A549 (cell line): ENCODE measurements at regions of chr17 and their contacts with region 1.

Region 1: GRCh38 chr17:49191917-49192741 is 18.2 kb downstream of the GNGT2 start:
- DNase-seq: peak; percentile 75 to 98
- ATAC-seq: peak; percentile 75 to 77
- H3K4me3 ChIP-seq: peak overlapping the region; percentile 64
- H3K27ac ChIP-seq: peak overlapping the region; percentile 93 to 96
- H3K4me1 ChIP-seq: peaks cover 13% of the 10 kb centered on the region
- CTCF ChIP-seq: peak; percentile 70
- EP300 ChIP-seq: peak in 1 of 2 experiments; percentile 11; a peak in 1 of 5 replicates
- POLR2A ChIP-seq: peak; percentile 29
- RAD21 ChIP-seq: peak; percentile 40 to 66

Region 2: DNA sequence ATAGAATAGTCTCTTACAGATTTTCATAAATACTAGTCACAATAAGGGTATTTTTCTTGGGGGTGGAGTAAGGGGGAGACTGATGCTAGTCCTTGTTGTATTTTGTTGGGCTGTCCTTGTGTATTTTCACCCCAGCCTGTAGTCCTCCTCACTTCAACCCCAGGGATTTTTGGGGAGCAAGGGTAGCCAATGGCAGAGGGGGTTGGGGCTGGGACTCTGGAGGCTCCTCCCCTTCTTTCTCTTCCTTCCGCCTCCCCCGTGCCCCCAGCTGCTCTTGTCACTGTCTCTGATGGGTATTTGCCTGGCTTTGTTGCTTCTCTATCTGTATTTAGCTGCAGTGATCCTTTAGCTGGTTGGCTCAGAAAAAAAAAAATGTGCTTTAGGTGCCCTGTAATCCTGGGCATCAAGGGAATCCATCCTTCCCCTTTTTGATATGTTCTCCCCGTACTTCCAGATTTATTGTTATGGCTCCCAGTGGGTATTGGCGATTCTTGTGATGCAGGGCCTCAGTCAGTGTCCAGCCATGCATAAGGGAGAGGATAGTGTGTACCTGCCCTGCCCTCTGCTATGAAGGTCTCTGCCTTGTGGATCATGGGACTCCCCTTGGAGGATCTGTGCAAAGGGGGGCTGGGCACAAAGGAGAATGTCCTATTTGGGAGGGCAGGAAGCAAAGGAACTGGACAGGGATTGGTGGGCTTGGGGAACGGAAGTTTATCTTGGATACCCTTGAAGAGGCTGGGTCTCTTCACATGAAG is 264.0 kb before region 1 on chr17:
- CTCF ChIA-PET with region 1: no interaction called
- POLR2A ChIA-PET with region 1: no interaction called
- DNase-seq: no peak
- ATAC-seq: peak in 1 of 2 experiments; percentile 6; a peak in 1 of 6 replicates
- H3K4me3 ChIP-seq: no peak overlapping the region
- H3K27ac ChIP-seq: no peak overlapping the region
- H3K4me1 ChIP-seq: no peaks in the 10 kb centered on the region
- CTCF ChIP-seq: no peak
- EP300 ChIP-seq: no peak
- POLR2A ChIP-seq: no peak
- RAD21 ChIP-seq: no peak

Region 3: DNA sequence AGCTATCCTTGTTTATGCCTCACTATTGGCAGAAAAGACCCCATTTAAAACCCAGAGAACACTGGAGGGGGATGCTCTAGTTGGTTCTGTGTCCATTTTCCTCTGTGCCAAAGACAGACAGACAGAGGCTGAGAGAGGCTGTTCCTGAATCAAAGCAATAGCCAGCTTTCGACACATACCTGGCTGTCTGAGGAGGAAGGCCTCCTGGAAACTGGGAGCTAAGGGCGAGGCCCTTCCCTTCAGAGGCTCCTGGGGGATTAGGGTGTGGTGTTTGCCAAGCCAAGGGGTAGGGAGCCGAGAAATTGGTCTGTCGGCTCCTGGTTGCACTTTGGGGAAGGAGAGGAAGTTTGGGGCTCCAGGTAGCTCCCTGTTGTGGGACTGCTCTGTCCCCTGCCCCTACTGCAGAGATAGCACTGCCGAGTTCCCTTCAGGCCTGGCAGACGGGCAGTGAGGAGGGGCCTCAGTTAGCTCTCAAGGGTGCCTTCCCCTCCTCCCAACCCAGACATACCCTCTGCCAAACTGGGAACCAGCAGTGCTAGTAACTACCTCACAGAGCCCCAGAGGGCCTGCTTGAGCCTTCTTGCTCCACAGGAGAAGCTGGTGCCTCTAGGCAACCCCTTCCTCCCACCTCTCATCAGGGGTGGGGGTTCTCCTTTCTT is 138.8 kb before region 1 on chr17:
- CTCF ChIA-PET with region 1: interaction called, 11 read pairs
- POLR2A ChIA-PET with region 1: interaction called, 5 read pairs
- DNase-seq: no peak
- ATAC-seq: peak; percentile 21 to 50; a peak in 4 of 6 replicates
- H3K4me3 ChIP-seq: no peak overlapping the region
- H3K27ac ChIP-seq: peak overlapping the region in 1 of 2 experiments; percentile 25; a peak in 1 of 6 replicates
- H3K4me1 ChIP-seq: no peaks in the 10 kb centered on the region
- CTCF ChIP-seq: no peak
- EP300 ChIP-seq: no peak
- POLR2A ChIP-seq: no peak
- RAD21 ChIP-seq: no peak

Region 4: GRCh38 chr17:49063652-49064051 is 128.5 kb before region 1 on chr17:
- CTCF ChIA-PET with region 1: interaction called, 11 read pairs
- POLR2A ChIA-PET with region 1: interaction called, 4 read pairs
- DNase-seq: no peak
- ATAC-seq: no peak
- H3K4me3 ChIP-seq: no peak overlapping the region
- H3K27ac ChIP-seq: no peak overlapping the region
- H3K4me1 ChIP-seq: peaks cover 4% of the 10 kb centered on the region
- CTCF ChIP-seq: no peak
- EP300 ChIP-seq: no peak
- POLR2A ChIP-seq: no peak
- RAD21 ChIP-seq: no peak

Region 5: GRCh38 chr17:49101054-49101947 is 90.8 kb before region 1 on chr17:
- CTCF ChIA-PET with region 1: interaction called, 11 read pairs
- POLR2A ChIA-PET with region 1: interaction called, 15 read pairs
- DNase-seq: no peak
- ATAC-seq: peak; percentile 53 to 54
- H3K4me3 ChIP-seq: no peak overlapping the region
- H3K27ac ChIP-seq: peak overlapping the region; percentile 59 to 83
- H3K4me1 ChIP-seq: peaks cover 32% of the 10 kb centered on the region
- CTCF ChIP-seq: no peak
- EP300 ChIP-seq: no peak
- POLR2A ChIP-seq: no peak
- RAD21 ChIP-seq: no peak

Region 6: GRCh38 chr17:49108318-49108717 is 83.8 kb before region 1 on chr17:
- CTCF ChIA-PET with region 1: interaction called, 12 read pairs
- POLR2A ChIA-PET with region 1: interaction called, 15 read pairs
- DNase-seq: peak; percentile 62 to 72
- ATAC-seq: peak; percentile 36 to 52; a peak in 5 of 6 replicates
- H3K4me3 ChIP-seq: no peak overlapping the region
- H3K27ac ChIP-seq: peak overlapping the region; percentile 81 to 85
- H3K4me1 ChIP-seq: peaks cover 50% of the 10 kb centered on the region
- CTCF ChIP-seq: no peak
- EP300 ChIP-seq: peak; percentile 19 to 59; a peak in 2 of 5 replicates
- POLR2A ChIP-seq: no peak
- RAD21 ChIP-seq: no peak; a peak in 1 of 5 replicates

Region 7: DNA sequence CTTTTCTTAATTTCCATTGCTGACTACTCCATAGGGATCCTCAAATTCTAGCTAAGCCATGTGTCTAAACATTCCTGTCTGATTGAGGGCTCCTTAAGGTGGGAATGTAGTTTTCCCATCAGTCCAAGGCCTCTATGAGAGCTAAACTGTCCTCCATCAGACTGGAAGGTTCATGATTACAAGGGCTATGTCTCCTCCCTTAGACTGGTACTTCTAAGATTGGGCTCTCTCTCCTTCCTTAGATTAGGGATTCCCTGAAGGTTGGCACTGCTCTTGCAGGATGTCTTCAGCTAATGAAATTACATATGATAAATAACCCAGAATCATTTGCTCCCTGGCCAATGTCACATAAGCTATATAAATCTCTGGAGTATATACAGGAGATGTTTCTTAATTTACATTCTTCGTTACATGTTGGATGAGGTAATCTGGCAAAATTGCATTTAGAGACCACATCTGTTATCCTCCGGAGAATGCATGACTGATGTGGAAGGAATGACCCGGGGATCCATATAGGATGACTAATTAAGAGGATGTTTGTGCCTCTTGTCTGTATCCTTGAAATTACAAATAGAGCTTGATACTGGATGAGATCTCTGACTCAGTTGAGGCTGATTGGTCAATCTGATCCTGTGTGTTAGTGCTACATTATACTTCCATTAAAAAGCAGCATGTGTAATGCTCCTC is 45.4 kb before region 1 on chr17:
- CTCF ChIA-PET with region 1: interaction called, 8 read pairs
- POLR2A ChIA-PET with region 1: interaction called, 12 read pairs
- DNase-seq: peak; percentile 83 to 87
- ATAC-seq: peak; percentile 92 to 99
- H3K4me3 ChIP-seq: no peak overlapping the region
- H3K27ac ChIP-seq: peak overlapping the region; percentile 2 to 67; a peak in 3 of 6 replicates
- H3K4me1 ChIP-seq: peaks cover 17% of the 10 kb centered on the region
- CTCF ChIP-seq: no peak
- EP300 ChIP-seq: peak in 1 of 2 experiments; percentile 31; a peak in 1 of 5 replicates
- POLR2A ChIP-seq: no peak
- RAD21 ChIP-seq: no peak

Region 8: GRCh38 chr17:49180303-49180702 is 11.8 kb before region 1 on chr17:
- CTCF ChIA-PET with region 1: interaction called, 55 read pairs
- POLR2A ChIA-PET with region 1: interaction called, 3 read pairs
- DNase-seq: peak; percentile 69 to 79
- ATAC-seq: peak; percentile 62 to 87
- H3K4me3 ChIP-seq: no peak overlapping the region
- H3K27ac ChIP-seq: no peak overlapping the region
- H3K4me1 ChIP-seq: no peaks in the 10 kb centered on the region
- CTCF ChIP-seq: peak; percentile 85
- EP300 ChIP-seq: no peak
- POLR2A ChIP-seq: no peak
- RAD21 ChIP-seq: peak; percentile 72 to 75

Region 9: GRCh38 chr17:49244845-49245244 is 52.7 kb after region 1 on chr17:
- CTCF ChIA-PET with region 1: no interaction called
- POLR2A ChIA-PET with region 1: no interaction called
- DNase-seq: no peak
- ATAC-seq: no peak
- H3K4me3 ChIP-seq: no peak overlapping the region
- H3K27ac ChIP-seq: no peak overlapping the region
- H3K4me1 ChIP-seq: peaks cover 8% of the 10 kb centered on the region
- CTCF ChIP-seq: no peak
- EP300 ChIP-seq: no peak
- POLR2A ChIP-seq: no peak
- RAD21 ChIP-seq: no peak

Region 10: DNA sequence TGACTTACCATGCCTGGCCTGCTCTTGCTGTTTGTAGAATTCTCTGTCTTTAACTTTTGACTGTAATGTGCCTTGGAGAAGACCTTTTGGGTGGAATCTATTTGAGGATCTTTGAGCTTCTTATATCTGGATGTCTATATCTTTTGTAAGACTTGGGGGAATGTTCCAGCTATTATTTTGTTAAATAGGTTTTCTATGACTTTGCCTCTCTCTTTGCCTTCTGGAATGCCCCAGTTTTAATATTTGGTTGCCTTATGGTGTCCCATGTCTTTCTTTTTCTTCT is 232.8 kb after region 1 on chr17:
- CTCF ChIA-PET with region 1: no interaction called
- POLR2A ChIA-PET with region 1: no interaction called
- DNase-seq: no peak
- ATAC-seq: no peak
- H3K4me3 ChIP-seq: no peak overlapping the region
- H3K27ac ChIP-seq: no peak overlapping the region
- H3K4me1 ChIP-seq: no peaks in the 10 kb centered on the region
- CTCF ChIP-seq: no peak
- EP300 ChIP-seq: no peak
- POLR2A ChIP-seq: no peak
- RAD21 ChIP-seq: no peak